HCT116 (cell line): ENCODE measurements at regions of chr19 and their contacts with region 1.

Region 1: DNA sequence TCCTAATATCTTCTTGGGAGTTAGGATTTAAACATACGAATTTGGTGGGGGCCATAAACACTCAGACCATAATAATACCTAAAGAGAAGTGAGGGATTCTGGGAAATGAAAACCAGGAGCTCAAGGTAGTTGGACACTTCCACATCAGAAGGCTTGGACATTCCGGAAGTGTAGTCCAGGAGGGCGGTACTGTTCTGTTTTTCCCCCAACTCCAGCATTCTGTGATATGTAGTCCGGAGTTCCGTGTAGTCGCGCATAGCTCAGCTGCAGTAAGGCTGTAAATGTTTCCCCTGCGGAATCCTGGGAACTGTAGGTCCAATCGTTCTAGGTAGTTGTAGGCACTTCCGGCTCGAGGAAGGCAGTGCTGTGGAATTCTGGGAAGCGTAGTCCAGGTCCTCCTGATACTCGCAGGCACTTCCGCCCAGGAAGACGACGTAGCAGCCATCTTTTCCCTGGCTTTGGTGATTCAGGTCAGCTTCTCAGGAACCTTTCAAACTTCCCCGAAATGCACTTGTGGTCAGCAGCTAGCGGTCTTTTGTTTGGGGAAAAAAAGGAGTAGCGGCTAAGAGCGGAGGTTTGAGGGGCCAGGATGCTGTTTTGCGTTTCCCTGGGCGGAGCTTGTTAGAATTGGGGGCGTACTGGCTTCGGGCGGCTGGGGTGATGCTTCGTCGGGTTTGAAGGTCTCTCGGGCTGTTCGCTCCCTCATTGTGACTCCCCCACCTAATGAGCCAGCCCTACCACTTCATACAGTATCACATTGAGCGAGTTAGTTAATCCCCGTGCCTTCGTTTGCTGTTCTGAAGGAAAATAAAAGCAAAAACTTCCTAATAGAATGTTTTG is at the start of gene ZNF226:
- DNase-seq: peak; percentile 97
- ATAC-seq: peak; percentile 98
- H3K4me3 ChIP-seq: peak within 1 kb of the TSS; percentile 68 to 76
- H3K27ac ChIP-seq: peak within 1 kb of the TSS; percentile 66
- H3K4me1 ChIP-seq: peaks cover 7 to 14% of the 10 kb centered on the region in 2 experiments
- H3K27me3 ChIP-seq: no peaks in the 10 kb centered on the region
- CTCF ChIP-seq: no peak
- POLR2A ChIP-seq: peak; percentile 61
- RAD21 ChIP-seq: no peak
- total RNA-seq, gene ZNF226: 17.4 TPM

Region 2: DNA sequence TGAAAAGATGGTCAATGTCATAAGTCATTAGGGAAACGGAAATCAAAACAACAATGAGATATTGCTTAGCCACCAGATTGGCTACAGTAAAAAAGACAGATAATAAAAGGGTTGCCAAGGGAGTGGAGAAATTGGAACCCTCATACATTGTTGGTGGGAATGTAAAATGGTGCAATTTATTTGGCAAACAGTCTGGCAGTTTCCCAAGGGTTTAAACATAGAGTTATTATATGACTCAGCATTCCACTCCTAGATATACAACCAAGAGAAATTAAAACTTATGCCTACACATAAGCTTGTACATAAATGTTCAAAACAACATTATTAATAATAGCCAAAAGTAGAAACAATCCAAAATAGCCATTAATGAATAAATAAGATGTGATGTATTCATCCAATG is 37.6 kb after region 1 on chr19:
- CTCF ChIA-PET with region 1: no interaction called
- POLR2A ChIA-PET with region 1: interaction called, 4 read pairs
- RAD21 ChIA-PET with region 1: no interaction called
- intact Hi-C with region 1: loop called (anchors 5 kb)
- DNase-seq: no peak
- ATAC-seq: no peak
- H3K4me3 ChIP-seq: no peak overlapping the region
- H3K27ac ChIP-seq: no peak overlapping the region
- H3K4me1 ChIP-seq: peaks cover 0 to 3% of the 10 kb centered on the region in 2 experiments; a peak in 1 of 4 replicates
- H3K27me3 ChIP-seq: no peaks in the 10 kb centered on the region
- CTCF ChIP-seq: no peak
- POLR2A ChIP-seq: no peak
- RAD21 ChIP-seq: no peak